ENCODE measurements at regions of chr1 and their contacts with region 1.

Region 1: DNA sequence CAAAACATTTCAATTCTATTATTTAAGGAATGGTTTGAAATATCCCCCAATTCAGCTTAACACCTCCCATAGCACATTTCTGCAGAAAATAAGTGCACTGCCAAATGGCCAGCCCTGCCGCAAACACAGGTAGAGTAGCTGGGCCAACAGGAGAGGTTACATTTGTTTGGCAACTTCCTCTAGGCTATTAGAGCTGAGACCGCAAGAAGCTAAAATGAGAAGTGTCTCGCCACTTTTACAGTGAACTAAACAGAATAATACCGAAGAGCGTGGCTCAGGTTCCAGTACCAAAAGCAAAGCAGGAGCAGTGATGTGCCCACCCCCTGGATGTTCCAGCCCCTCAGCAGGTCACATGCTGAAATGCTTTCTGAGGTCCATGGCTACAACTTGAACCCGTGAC is 154.5 kb upstream of the PKN2 start:
- DNase-seq: no peak
- H3K4me3 Mint-ChIP-seq: no peak overlapping the region
- H3K27ac Mint-ChIP-seq: no peak overlapping the region
- H3K4me1 Mint-ChIP-seq: no peaks in the 10 kb centered on the region
- H3K27me3 Mint-ChIP-seq: no peaks in the 10 kb centered on the region
- CTCF ChIP-seq: no peak

Region 2: GRCh38 chr1:88499671-88500070 is 29.9 kb before region 1 on chr1:
- CTCF ChIA-PET with region 1: no interaction called
- intact Hi-C with region 1: loop called (anchors 2 kb)
- DNase-seq: no peak
- H3K4me3 Mint-ChIP-seq: no peak overlapping the region
- H3K27ac Mint-ChIP-seq: no peak overlapping the region
- H3K4me1 Mint-ChIP-seq: no peaks in the 10 kb centered on the region
- H3K27me3 Mint-ChIP-seq: no peaks in the 10 kb centered on the region
- CTCF ChIP-seq: no peak

Region 3: GRCh38 chr1:88961647-88962275 is 432.2 kb after region 1 on chr1:
- CTCF ChIA-PET with region 1: no interaction called
- intact Hi-C with region 1: no loop called
- DNase-seq: no peak
- H3K4me3 Mint-ChIP-seq: no peak overlapping the region
- H3K27ac Mint-ChIP-seq: no peak overlapping the region
- H3K4me1 Mint-ChIP-seq: peaks cover under 1% of the 10 kb centered on the region
- H3K27me3 Mint-ChIP-seq: no peaks in the 10 kb centered on the region
- CTCF ChIP-seq: no peak

Measured in Calu3 (cell line).